ENCODE measurements at regions of chr7 and their contacts with region 1.

Region 1: GRCh38 chr7:101410743-101411507 is 48.2 kb downstream of the COL26A1 start:
- DNase-seq: peak; percentile 86

Region 2: GRCh38 chr7:101422361-101423195 is 11.7 kb after region 1 on chr7:
- CTCF ChIA-PET with region 1: interaction called, 13 read pairs
- POLR2A ChIA-PET with region 1: no interaction called
- DNase-seq: no peak

Region 3: DNA sequence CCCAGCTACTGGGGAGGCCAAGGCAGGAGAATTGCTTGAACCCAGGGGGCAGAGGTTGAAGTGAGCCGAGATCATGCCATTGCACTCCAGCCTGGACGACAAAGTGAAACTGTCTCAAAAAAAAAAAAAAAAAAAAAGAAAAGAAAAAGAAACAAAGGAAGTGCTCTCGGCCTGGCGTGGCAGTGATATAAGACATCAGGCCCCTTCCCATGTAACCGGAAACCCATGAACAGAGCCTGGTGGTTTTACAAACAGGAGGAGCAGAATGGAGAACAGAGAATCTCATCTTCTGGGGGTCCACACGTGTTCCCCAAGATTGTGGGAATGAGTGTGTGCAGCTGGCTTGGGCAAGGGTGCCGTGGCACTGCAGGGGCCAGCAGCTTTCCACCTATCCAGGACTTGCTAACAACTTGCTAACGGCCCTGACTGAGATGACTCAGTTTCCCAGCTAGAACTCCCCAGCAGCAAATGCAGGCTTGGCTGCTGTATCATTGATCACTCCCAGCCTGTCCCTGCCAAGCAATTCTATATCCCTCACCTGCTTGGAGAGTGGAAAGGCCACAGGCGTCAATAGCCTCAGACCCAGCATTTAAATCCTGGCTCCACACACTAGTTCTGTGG is 54.8 kb after region 1 on chr7:
- CTCF ChIA-PET with region 1: no interaction called
- POLR2A ChIA-PET with region 1: no interaction called
- DNase-seq: no peak

Measured in HEK293T (cell line).